H1 (cell line): ENCODE measurements at regions of chr6 and their contacts with region 1.

Region 1: GRCh38 chr6:30717042-30717844 is at the start of gene MDC1:
- DNase-seq: peak; percentile 92 to 99
- H3K4me3 ChIP-seq: peak within 1 kb of the TSS; percentile 63 to 100 (median 82)
- H3K27ac ChIP-seq: peak within 1 kb of the TSS; percentile 94
- H3K4me1 ChIP-seq: peaks cover 0 to 2% (median 0%) of the 10 kb centered on the region in 4 experiments; a peak in 6 of 7 replicates
- H3K27me3 ChIP-seq: no peaks in the 10 kb centered on the region
- CTCF ChIP-seq: peak in 1 of 3 experiments; percentile 15; a peak in 1 of 4 replicates
- EP300 ChIP-seq: peak in 1 of 2 experiments; percentile 91; a peak in 2 of 3 replicates
- POLR2A ChIP-seq: peak; percentile 90 to 97
- RAD21 ChIP-seq: peak in 1 of 2 experiments; percentile 15; a peak in 1 of 4 replicates
- total RNA-seq, gene MDC1: 68.0 and 81.1 TPM in 2 replicates

Region 2: DNA sequence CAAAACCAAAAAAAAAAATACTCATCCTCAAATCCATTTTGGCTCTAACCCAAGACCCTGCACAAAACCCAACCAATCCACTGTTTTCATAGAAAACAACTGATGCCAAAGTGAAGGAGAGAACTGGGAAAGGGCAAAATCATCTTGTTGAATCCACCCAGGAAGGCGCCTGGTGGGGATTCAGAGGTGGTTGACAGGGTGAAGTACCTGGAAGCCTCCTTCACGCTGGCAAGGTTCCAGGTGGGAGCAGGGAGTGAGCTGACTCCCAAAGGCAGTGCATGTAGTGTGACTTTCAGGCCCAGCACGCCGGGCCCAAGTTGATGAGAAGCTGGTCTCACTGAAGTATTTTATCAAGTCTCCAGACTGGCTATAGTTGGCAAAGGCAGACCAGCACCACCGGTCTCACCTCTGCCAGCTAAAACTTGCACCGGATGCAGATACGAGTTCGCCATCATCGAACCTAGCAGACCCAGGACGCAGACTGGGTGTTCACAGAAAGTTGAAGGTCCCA is 116.7 kb before region 1 on chr6:
- CTCF ChIA-PET with region 1: interaction called, 3 read pairs
- POLR2A ChIA-PET with region 1: interaction called, 11 read pairs
- DNase-seq: no peak
- H3K4me3 ChIP-seq: no peak overlapping the region
- H3K27ac ChIP-seq: no peak overlapping the region
- H3K4me1 ChIP-seq: no peaks in the 10 kb centered on the region
- H3K27me3 ChIP-seq: no peaks in the 10 kb centered on the region
- CTCF ChIP-seq: no peak
- EP300 ChIP-seq: no peak
- POLR2A ChIP-seq: no peak
- RAD21 ChIP-seq: no peak

Region 3: DNA sequence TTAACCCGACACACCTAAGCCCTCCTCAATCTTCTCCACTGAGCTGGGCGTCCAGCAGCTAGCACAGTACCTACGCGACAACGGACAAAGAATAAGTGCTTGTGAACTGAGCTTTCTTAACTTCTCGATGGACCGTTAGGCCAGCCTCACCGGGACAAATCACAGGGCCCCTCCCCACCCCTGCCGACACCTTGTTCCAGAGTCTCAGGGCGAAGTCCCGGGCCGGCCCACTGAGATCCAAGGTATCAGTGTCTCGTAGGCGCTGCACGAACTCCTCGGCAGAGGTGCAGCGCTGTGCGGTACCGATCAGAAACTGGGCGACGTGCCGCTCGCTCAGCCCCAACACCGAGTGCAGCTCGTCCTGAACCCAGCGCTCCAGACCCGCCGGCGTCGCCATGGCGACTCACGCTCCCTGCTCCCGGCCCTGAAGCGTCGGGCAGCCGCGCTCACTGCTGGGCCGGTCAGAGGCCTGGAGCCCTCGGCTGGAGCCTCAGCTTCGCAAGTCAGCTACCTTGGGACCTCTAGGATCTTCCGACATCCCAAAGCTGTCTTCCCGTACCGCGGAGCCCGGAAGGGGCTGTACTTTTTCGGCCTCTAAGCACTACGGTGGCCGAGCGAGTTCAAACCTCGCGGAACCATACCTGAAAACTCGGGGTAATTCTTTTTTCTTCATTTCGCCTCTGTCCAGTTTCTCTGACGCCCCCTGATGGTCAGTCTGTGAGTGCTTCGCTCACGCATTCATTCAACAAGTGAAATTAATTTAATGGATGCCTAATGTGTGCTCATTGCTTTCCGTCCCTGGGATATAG is 44.6 kb before region 1 on chr6 and contains the start of gene DHX16:
- CTCF ChIA-PET with region 1: interaction called, 54 read pairs
- POLR2A ChIA-PET with region 1: interaction called, 388 read pairs
- DNase-seq: peak; percentile 88 to 94
- H3K4me3 ChIP-seq: peak within 1 kb of the TSS; percentile 76 to 99 (median 90)
- H3K27ac ChIP-seq: no peak within 1 kb of the TSS
- H3K4me1 ChIP-seq: no peaks in the 10 kb centered on the region; a peak in 1 of 7 replicates
- H3K27me3 ChIP-seq: no peaks in the 10 kb centered on the region
- CTCF ChIP-seq: peak; percentile 50 to 80 (median 72)
- EP300 ChIP-seq: 0 out of 3 replicates have a peak, but pooled peaks of 1 of the 2 experiments have one; percentile 32
- POLR2A ChIP-seq: no peak
- RAD21 ChIP-seq: peak; percentile 19 to 42; a peak in 2 of 4 replicates
- total RNA-seq, gene DHX16: 27.4 and 29.4 TPM in 2 replicates

Region 4: GRCh38 chr6:30686908-30687658 is 30.2 kb before region 1 on chr6:
- CTCF ChIA-PET with region 1: interaction called, 54 read pairs
- POLR2A ChIA-PET with region 1: interaction called, 732 read pairs
- DNase-seq: peak in 1 of 2 experiments; percentile 92
- H3K4me3 ChIP-seq: peak overlapping the region; percentile 49 to 97 (median 80)
- H3K27ac ChIP-seq: peak overlapping the region; percentile 35; the same call in 1 of the 2 replicates
- H3K4me1 ChIP-seq: peaks cover 7 to 49% (median 32%) of the 10 kb centered on the region in 4 experiments
- H3K27me3 ChIP-seq: no peaks in the 10 kb centered on the region
- CTCF ChIP-seq: no peak
- EP300 ChIP-seq: peak in 1 of 2 experiments; percentile 94; a peak in 1 of 3 replicates
- POLR2A ChIP-seq: no peak; a peak in 1 of 3 replicates
- RAD21 ChIP-seq: no peak

Region 5: DNA sequence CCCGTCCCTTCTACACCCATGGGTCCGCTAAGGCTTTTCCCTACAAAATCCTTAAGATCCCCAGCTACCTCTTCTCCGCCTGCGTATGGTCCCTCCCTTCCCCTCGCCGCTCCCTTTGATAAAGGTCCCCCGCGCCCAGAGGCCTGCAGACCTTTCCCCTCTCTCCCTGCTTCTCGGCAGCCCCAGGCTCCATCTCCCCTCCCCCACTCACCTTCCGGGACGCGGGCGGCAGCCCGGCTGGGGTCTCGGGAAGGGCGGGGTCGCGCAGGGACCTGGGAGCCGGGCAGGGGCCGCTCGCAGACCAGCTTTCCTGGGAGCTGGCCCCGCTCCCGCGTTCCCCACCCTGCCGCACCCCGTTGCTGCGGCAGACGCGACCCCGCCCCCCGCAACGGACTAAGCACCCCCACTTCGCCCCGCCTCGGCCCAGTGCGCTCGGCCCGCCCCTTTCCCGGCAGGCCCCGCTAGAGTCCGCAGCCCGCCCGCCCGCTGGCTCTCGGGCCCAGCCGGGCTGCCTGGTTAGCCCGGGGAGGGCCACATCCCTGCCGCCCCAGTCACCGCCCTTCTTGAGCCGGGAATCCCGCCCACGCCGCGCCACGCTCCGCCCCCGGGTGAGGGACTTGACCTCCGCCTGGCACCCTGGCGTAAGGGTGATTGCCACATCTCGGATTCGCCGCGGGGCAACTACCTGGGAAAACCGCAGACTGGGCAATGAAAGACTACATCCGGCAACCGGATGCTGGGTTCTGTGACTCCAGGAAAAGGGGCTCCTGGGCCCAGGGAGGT is 25.3 kb after region 1 on chr6 and contains the start of gene FLOT1:
- CTCF ChIA-PET with region 1: interaction called, 11 read pairs
- POLR2A ChIA-PET with region 1: interaction called, 337 read pairs
- DNase-seq: peak; percentile 87 to 97
- H3K4me3 ChIP-seq: peak within 1 kb of the TSS; percentile 76 to 95 (median 88)
- H3K27ac ChIP-seq: peak within 1 kb of the TSS; percentile 54; the same call in 1 of the 2 replicates
- H3K4me1 ChIP-seq: peaks cover 3 to 18% (median 7%) of the 10 kb centered on the region in 4 experiments; a peak in 6 of 7 replicates
- H3K27me3 ChIP-seq: no peaks in the 10 kb centered on the region; a peak in 1 of 7 replicates
- CTCF ChIP-seq: no peak
- EP300 ChIP-seq: no peak
- POLR2A ChIP-seq: peak; percentile 24 to 47
- RAD21 ChIP-seq: peak; percentile 2 to 4; a peak in 2 of 4 replicates
- total RNA-seq, gene FLOT1: 85.4 and 87.5 TPM in 2 replicates

Region 6: GRCh38 chr6:31058128-31058894 is 341.1 kb after region 1 on chr6:
- CTCF ChIA-PET with region 1: no interaction called
- POLR2A ChIA-PET with region 1: no interaction called
- DNase-seq: no peak
- H3K4me3 ChIP-seq: no peak overlapping the region
- H3K27ac ChIP-seq: no peak overlapping the region
- H3K4me1 ChIP-seq: no peaks in the 10 kb centered on the region; a peak in 1 of 7 replicates
- H3K27me3 ChIP-seq: no peaks in the 10 kb centered on the region
- CTCF ChIP-seq: peak in 2 of 3 experiments; percentile 14 to 57; a peak in 2 of 4 replicates
- EP300 ChIP-seq: no peak
- POLR2A ChIP-seq: no peak
- RAD21 ChIP-seq: peak in 1 of 2 experiments; percentile 11; a peak in 1 of 4 replicates

Region 7: DNA sequence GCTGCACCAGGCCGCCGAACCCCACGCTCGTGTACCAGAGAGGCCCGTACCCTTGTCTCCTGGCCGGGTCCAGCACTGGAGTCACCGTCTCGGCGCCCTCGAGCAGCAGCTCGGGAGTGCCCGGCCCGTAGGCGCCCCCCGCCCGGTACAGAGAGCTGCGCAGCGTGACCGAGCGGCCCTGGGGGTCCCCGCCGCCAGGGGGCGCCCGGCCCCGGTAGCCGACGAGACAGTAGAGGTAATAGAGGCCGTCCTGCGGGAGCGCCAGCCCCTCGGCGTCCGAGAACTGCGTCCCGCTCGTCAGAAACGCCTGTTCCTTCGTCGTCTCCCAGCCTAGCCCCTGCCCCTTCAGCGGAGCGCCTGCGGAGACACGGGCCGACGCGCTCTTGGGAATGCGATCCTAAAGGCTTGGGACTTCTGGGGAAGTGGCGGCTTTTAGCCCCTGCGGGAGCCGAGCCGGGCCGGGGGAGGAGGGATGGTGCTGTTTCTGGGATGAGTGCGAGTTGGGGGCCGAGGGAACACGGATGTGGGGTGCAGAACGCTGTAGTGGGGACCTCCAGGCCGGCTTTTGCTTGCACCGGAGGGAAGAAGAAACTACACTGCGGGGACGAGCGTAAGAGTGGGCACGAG is 863.7 kb after region 1 on chr6:
- CTCF ChIA-PET with region 1: no interaction called
- POLR2A ChIA-PET with region 1: no interaction called
- DNase-seq: peak; percentile 38 to 96
- H3K4me3 ChIP-seq: peak overlapping the region; percentile 54 to 89 (median 80)
- H3K27ac ChIP-seq: no peak overlapping the region
- H3K4me1 ChIP-seq: peaks cover 0 to 6% (median 6%) of the 10 kb centered on the region in 4 experiments; a peak in 6 of 7 replicates
- H3K27me3 ChIP-seq: peaks cover 0 to 8% (median 7%) of the 10 kb centered on the region in 4 experiments; a peak in 5 of 7 replicates
- CTCF ChIP-seq: peak in 2 of 3 experiments; percentile 89 to 93; a peak in 3 of 4 replicates
- EP300 ChIP-seq: no peak
- POLR2A ChIP-seq: 0 out of 3 replicates have a peak, but pooled peaks of 1 of the 2 experiments have one; percentile 18
- RAD21 ChIP-seq: peak; percentile 39 to 66